B cell (primary cell): ENCODE measurements at regions of chr5 and their contacts with region 1.

Region 1: DNA sequence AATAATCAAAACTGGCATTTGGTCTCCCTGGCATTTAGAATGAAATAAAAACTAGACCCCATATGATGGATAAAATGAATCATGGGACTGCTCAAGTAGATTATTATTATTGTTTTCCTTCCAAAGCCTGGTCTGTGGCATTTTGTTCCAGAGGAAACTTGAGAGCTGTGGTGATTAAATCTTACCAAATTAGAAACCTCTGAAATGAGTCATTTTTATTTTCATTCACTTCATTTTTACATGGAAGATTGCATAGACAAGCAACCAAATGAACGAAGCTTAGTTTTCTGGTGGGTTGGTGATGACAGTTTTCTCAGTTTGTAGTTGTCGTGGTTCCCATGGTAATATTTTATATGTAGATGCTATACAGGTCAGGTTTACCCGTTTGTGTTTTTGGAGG is 23.4 kb downstream of the PAM start:
- DNase-seq: no peak
- ATAC-seq: no peak
- H3K4me3 ChIP-seq: no peak overlapping the region
- H3K4me3 Mint-ChIP-seq: no peak overlapping the region
- H3K27ac ChIP-seq: no peak overlapping the region
- H3K27ac Mint-ChIP-seq: no peak overlapping the region
- H3K4me1 ChIP-seq: no peaks in the 10 kb centered on the region
- H3K4me1 Mint-ChIP-seq: peaks cover 3% of the 10 kb centered on the region
- H3K27me3 ChIP-seq: no peaks in the 10 kb centered on the region
- H3K27me3 Mint-ChIP-seq: no peaks in the 10 kb centered on the region
- CTCF ChIP-seq: no peak

Region 2: DNA sequence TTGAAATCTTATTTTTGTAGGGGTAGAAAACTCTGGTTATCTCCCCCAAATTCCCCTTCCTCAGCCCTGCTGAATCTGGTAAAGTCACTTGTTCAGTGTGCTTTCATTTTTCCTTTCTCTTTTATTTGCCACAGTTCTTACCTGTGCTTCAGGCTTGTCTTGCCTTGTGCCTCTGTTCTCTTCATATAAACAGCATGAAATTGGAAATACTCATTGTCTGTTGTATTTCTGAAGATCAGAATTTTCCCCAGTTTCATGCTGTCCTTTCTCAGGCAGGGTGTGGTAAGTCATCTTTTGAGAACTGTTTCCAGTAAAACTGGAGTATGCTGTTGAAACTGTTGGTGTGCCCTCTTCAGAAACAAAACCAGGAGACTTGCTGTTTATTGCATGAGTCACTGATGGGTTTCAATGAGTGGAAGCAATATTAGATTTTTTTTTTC is 16.4 kb before region 1 on chr5:
- CTCF ChIA-PET with region 1: interaction called, 13 read pairs
- POLR2A ChIA-PET with region 1: no interaction called
- intact Hi-C with region 1: no loop called
- DNase-seq: peak; percentile 17
- ATAC-seq: no peak
- H3K4me3 ChIP-seq: no peak overlapping the region
- H3K4me3 Mint-ChIP-seq: peak overlapping the region; percentile 55
- H3K27ac ChIP-seq: no peak overlapping the region
- H3K27ac Mint-ChIP-seq: no peak overlapping the region
- H3K4me1 ChIP-seq: peaks cover 4% of the 10 kb centered on the region in 2 donors
- H3K4me1 Mint-ChIP-seq: peaks cover 22% of the 10 kb centered on the region
- H3K27me3 ChIP-seq: no peaks in the 10 kb centered on the region
- H3K27me3 Mint-ChIP-seq: no peaks in the 10 kb centered on the region
- CTCF ChIP-seq: no peak

Region 3: GRCh38 chr5:102790748-102791147 is 12.3 kb after region 1 on chr5:
- CTCF ChIA-PET with region 1: interaction called, 10 read pairs
- POLR2A ChIA-PET with region 1: no interaction called
- intact Hi-C with region 1: no loop called
- DNase-seq: no peak
- ATAC-seq: no peak
- H3K4me3 ChIP-seq: no peak overlapping the region
- H3K4me3 Mint-ChIP-seq: no peak overlapping the region
- H3K27ac ChIP-seq: no peak overlapping the region
- H3K27ac Mint-ChIP-seq: no peak overlapping the region
- H3K4me1 ChIP-seq: no peaks in the 10 kb centered on the region
- H3K4me1 Mint-ChIP-seq: no peaks in the 10 kb centered on the region
- H3K27me3 ChIP-seq: no peaks in the 10 kb centered on the region
- H3K27me3 Mint-ChIP-seq: peaks cover 4% of the 10 kb centered on the region
- CTCF ChIP-seq: no peak